ENCODE measurements at regions of chr3 and their contacts with region 1.

Region 1: GRCh38 chr3:174382878-174383277 is 476.3 kb upstream of the NAALADL2 start:
- DNase-seq: no peak
- H3K4me3 ChIP-seq: no peak overlapping the region
- H3K27ac ChIP-seq: no peak overlapping the region
- H3K4me1 ChIP-seq: no peaks in the 10 kb centered on the region
- H3K27me3 ChIP-seq: peaks cover 2% of the 10 kb centered on the region
- CTCF ChIP-seq: no peak
- EP300 ChIP-seq: no peak
- POLR2A ChIP-seq: no peak

Region 2: DNA sequence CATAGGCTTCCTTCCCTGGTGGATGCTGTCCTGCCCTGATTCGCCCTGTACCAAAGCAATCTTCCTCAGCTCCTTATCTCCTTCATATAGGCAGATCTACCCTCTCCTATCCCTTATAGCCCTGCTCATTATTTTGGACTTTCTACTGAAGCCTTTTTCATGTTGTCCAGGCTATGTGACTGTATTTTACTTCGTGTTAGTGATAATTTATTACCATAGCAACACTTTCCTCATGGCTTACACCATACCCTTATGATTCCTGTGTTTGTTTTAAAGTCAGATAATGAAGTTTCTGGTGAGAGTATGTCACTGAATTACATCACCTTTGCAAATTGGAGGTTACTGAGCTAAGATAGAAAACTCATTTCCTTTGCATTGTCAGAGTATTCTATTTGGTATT is 632.8 kb before region 1 on chr3:
- intact Hi-C with region 1: loop called in 1 of 4 experiments (anchors 5 kb)
- DNase-seq: no peak
- H3K4me3 ChIP-seq: no peak overlapping the region
- H3K27ac ChIP-seq: no peak overlapping the region
- H3K4me1 ChIP-seq: no peaks in the 10 kb centered on the region
- H3K27me3 ChIP-seq: no peaks in the 10 kb centered on the region
- CTCF ChIP-seq: no peak
- EP300 ChIP-seq: no peak
- POLR2A ChIP-seq: no peak